ENCODE measurements at regions of chr15 and their contacts with region 1.

Region 1: GRCh38 chr15:57306161-57306943 is 70.0 kb upstream of the CGNL1 start:
- DNase-seq: peak; percentile 82 to 90
- H3K4me3 ChIP-seq: peak overlapping the region in 2 of 3 donors; percentile 38 to 43
- H3K27ac ChIP-seq: no peak overlapping the region
- H3K4me1 ChIP-seq: peaks cover 5 to 6% of the 10 kb centered on the region in 2 donors
- H3K27me3 ChIP-seq: no peaks in the 10 kb centered on the region
- CTCF ChIP-seq: peak; percentile 54 to 91 (median 76)
- POLR2A ChIP-seq: no peak

Region 2: GRCh38 chr15:56491110-56491722 is 815.1 kb before region 1 on chr15:
- intact Hi-C with region 1: loop called (anchors 10 kb)
- DNase-seq: peak; percentile 48 to 49
- H3K4me3 ChIP-seq: no peak overlapping the region
- H3K27ac ChIP-seq: no peak overlapping the region
- H3K4me1 ChIP-seq: no peaks in the 10 kb centered on the region
- H3K27me3 ChIP-seq: no peaks in the 10 kb centered on the region
- CTCF ChIP-seq: peak in 5 of 6 experiments; percentile 22 to 86 (median 45)
- POLR2A ChIP-seq: no peak

Region 3: GRCh38 chr15:56821721-56822425 is 484.5 kb before region 1 on chr15:
- intact Hi-C with region 1: loop called (anchors 10 kb)
- DNase-seq: peak; percentile 49 to 67
- H3K4me3 ChIP-seq: no peak overlapping the region
- H3K27ac ChIP-seq: no peak overlapping the region
- H3K4me1 ChIP-seq: peaks cover 2 to 4% of the 10 kb centered on the region in 2 donors
- H3K27me3 ChIP-seq: no peaks in the 10 kb centered on the region
- CTCF ChIP-seq: peak in 5 of 6 experiments; percentile 24 to 72 (median 64)
- POLR2A ChIP-seq: no peak

Region 4: GRCh38 chr15:56918046-56918938 is 388.1 kb before region 1 on chr15 and contains the start of gene TCF12:
- intact Hi-C with region 1: loop called (anchors 10 kb)
- DNase-seq: peak; percentile 94 to 95
- H3K4me3 ChIP-seq: peak within 1 kb of the TSS; percentile 92 to 98 (median 96)
- H3K27ac ChIP-seq: peak within 1 kb of the TSS; percentile 70 to 95 (median 90)
- H3K4me1 ChIP-seq: peaks cover 0 to 22% of the 10 kb centered on the region in 2 donors
- H3K27me3 ChIP-seq: no peaks in the 10 kb centered on the region
- CTCF ChIP-seq: peak in 3 of 6 experiments; percentile 22 to 43 (median 38)
- POLR2A ChIP-seq: peak; percentile 40 to 85
- total RNA-seq, gene TCF12: 54.8 to 156 (median 108) TPM

Region 5: GRCh38 chr15:57146506-57147201 is 159.7 kb before region 1 on chr15:
- intact Hi-C with region 1: loop called (anchors 5 kb)
- DNase-seq: no peak
- H3K4me3 ChIP-seq: no peak overlapping the region
- H3K27ac ChIP-seq: no peak overlapping the region
- H3K4me1 ChIP-seq: peaks cover 0 to 16% of the 10 kb centered on the region in 2 donors
- H3K27me3 ChIP-seq: no peaks in the 10 kb centered on the region
- CTCF ChIP-seq: peak; percentile 31 to 81 (median 56)
- POLR2A ChIP-seq: no peak

Region 6: DNA sequence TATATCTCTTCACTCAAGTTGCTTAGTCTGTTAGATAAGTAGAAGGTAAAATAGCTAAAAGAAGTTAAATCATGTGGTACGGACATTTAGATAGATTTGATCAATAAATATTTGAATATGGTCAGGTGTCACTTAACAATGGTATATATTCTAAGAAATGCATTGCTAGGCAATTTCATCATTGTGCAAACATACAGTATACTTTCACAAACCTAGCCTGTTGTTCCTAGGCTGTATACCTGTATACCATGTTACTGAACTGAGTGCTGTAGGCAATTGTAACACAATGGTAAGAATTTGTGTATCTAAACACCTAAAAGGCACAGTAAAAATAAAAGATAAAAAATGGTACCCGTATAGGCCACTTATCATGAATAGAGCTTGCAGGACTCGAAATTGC is 42.8 kb before region 1 on chr15:
- intact Hi-C with region 1: no loop called
- DNase-seq: no peak
- H3K4me3 ChIP-seq: no peak overlapping the region
- H3K27ac ChIP-seq: no peak overlapping the region
- H3K4me1 ChIP-seq: peaks cover 16 to 17% of the 10 kb centered on the region in 2 donors
- H3K27me3 ChIP-seq: no peaks in the 10 kb centered on the region
- CTCF ChIP-seq: no peak
- POLR2A ChIP-seq: no peak

Measured in thyroid gland (tissue), 4 donors.